Heart left ventricle (tissue), 16 donors: ENCODE measurements at regions of chr1 and their contacts with region 1.

Region 1: DNA sequence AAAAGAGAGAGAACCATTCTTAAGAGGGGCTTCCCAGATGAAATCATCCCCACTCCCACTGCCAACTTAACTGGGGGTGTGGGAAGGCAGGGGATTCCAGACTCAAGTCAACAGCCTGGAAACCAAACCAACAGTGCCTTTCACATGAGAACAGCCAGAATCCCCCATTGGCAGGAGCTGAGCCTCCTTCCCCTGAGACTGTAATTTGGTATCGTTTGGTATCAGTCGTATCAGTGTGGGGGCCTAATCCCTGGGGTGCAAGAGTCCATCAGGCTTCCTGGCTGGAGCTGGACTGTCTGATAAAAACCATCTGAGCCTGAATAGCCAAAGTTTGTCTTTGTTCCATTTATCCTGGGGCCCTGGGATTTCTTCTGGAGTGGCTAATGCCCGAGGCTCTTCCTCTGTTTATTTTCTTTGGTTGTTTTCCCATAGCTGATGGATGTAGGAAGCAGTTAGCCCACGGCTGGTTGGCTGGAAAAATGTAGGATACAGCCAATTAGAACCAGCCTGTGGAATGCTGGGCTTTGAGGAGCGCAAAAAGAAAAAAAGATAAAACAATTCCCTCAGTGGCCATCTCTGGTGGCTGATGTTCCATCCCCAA is 84.6 kb downstream of the LAMC2 start:
- DNase-seq: peak in 4 of 5 donors; percentile 51 to 80 (median 62)
- ATAC-seq: peak in 3 of 4 donors; percentile 62 to 79 (median 76)
- H3K4me3 ChIP-seq: no peak overlapping the region
- H3K27ac ChIP-seq: peak overlapping the region in 10 of 12 donors; percentile 12 to 67 (median 46)
- H3K4me1 ChIP-seq: peaks cover 0 to 46% (median 11%) of the 10 kb centered on the region in 12 donors
- H3K27me3 ChIP-seq: no peaks in the 10 kb centered on the region
- CTCF ChIP-seq: no peak
- POLR2A ChIP-seq: no peak

Region 2: GRCh38 chr1:183244466-183244865 is 26.2 kb before region 1 on chr1:
- intact Hi-C with region 1: loop called in 2 of 10 experiments (anchors 1 to 5 kb)
- DNase-seq: peak; percentile 49 to 89 (median 84)
- ATAC-seq: peak; percentile 22 to 64 (median 46)
- H3K4me3 ChIP-seq: no peak overlapping the region
- H3K27ac ChIP-seq: peak overlapping the region; percentile 26 to 88 (median 70)
- H3K4me1 ChIP-seq: peaks cover 0 to 60% (median 13%) of the 10 kb centered on the region in 12 donors
- H3K27me3 ChIP-seq: no peaks in the 10 kb centered on the region
- CTCF ChIP-seq: no peak
- POLR2A ChIP-seq: no peak

Region 3: GRCh38 chr1:183306317-183307042 is 35.8 kb after region 1 on chr1:
- intact Hi-C with region 1: no loop called
- DNase-seq: peak in 3 of 5 donors; percentile 33 to 83 (median 44)
- ATAC-seq: peak in 2 of 4 donors; percentile 63 to 71
- H3K4me3 ChIP-seq: no peak overlapping the region
- H3K27ac ChIP-seq: peak overlapping the region in 10 of 12 donors; percentile 12 to 82 (median 67)
- H3K4me1 ChIP-seq: peaks cover 0 to 87% (median 60%) of the 10 kb centered on the region in 12 donors
- H3K27me3 ChIP-seq: no peaks in the 10 kb centered on the region
- CTCF ChIP-seq: peak in 9 of 12 donors; percentile 11 to 45 (median 34)
- POLR2A ChIP-seq: no peak

Region 4: GRCh38 chr1:183416850-183417771 is 146.5 kb after region 1 on chr1:
- intact Hi-C with region 1: no loop called
- DNase-seq: peak; percentile 57 to 81 (median 65)
- ATAC-seq: peak; percentile 80 to 98 (median 96)
- H3K4me3 ChIP-seq: peak overlapping the region; percentile 17 to 54 (median 43)
- H3K27ac ChIP-seq: no peak overlapping the region
- H3K4me1 ChIP-seq: peaks cover 0 to 23% (median 16%) of the 10 kb centered on the region in 12 donors
- H3K27me3 ChIP-seq: peaks cover 0 to 73% (median 20%) of the 10 kb centered on the region in 9 donors
- CTCF ChIP-seq: no peak
- POLR2A ChIP-seq: no peak